ENCODE measurements at regions of chr4 and their contacts with region 1.

Region 1: DNA sequence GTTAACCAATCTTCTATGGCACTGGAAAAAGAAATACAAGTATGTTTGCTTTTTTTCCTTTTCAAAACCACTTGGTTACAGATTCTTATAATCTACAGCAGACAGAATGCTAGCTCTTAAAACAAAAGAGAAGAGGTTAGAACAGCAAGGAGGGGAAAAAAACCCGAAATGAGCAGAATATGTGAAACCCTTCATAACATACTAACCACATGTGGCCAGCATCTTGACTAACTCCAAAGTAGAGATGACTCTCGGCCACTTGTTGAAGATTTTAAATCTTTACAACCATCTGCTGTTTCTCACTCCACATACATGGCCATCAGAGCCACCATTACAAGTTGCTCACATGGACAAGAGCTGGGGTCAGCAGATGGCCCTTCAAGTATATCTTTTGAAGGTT is 100.3 kb downstream of the PAPSS1 start:
- DNase-seq: no peak
- ATAC-seq: no peak
- H3K4me3 ChIP-seq: no peak overlapping the region
- H3K27ac ChIP-seq: peak overlapping the region; percentile 23 to 51
- H3K4me1 ChIP-seq: peaks cover 2 to 4% of the 10 kb centered on the region in 2 donors
- H3K27me3 ChIP-seq: no peaks in the 10 kb centered on the region

Region 2: GRCh38 chr4:107579099-107579498 is 40.6 kb before region 1 on chr4:
- intact Hi-C with region 1: loop called in 1 of 2 experiments (anchors 1 kb)
- DNase-seq: no peak
- ATAC-seq: no peak
- H3K4me3 ChIP-seq: no peak overlapping the region
- H3K27ac ChIP-seq: no peak overlapping the region
- H3K4me1 ChIP-seq: no peaks in the 10 kb centered on the region
- H3K27me3 ChIP-seq: no peaks in the 10 kb centered on the region

Measured in aorta (tissue), 5 donors.